ENCODE measurements at regions of chr5 and their contacts with region 1.

Region 1: GRCh38 chr5:57298295-57298984 is 124.6 kb downstream of the GPBP1 start:
- DNase-seq: peak; percentile 86
- H3K4me3 ChIP-seq: no peak overlapping the region
- H3K27ac ChIP-seq: peak overlapping the region; percentile 47
- H3K4me1 ChIP-seq: peaks cover 10% of the 10 kb centered on the region
- H3K27me3 ChIP-seq: no peaks in the 10 kb centered on the region
- CTCF ChIP-seq: peak; percentile 72 to 73
- POLR2A ChIP-seq: no peak

Region 2: DNA sequence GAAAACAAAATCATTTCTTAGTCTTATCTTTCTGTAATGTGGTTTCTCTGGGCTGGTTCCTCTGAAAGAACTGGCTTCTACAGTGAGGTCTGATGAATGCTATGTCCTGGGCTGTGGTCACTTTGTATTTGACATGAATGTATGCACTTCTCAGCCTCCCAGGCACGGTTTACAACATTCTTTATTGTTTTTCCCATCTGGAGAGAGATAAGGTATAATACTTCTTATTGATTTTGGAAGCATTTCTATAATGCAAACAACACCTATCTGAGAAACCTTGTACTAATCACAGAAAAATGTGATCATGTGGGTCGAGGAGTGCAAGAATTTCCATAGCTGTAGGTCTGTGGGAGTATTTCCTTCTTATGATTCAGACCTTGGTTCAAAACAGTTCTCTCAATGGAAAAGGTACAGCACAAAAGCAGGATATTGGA is 137.3 kb after region 1 on chr5:
- CTCF ChIA-PET with region 1: interaction called, 7 read pairs
- POLR2A ChIA-PET with region 1: no interaction called
- dilution Hi-C with region 1: no loop called
- intact Hi-C with region 1: loop called (anchors 1 kb)
- DNase-seq: peak; percentile 99
- H3K4me3 ChIP-seq: no peak overlapping the region
- H3K27ac ChIP-seq: peak overlapping the region; percentile 98
- H3K4me1 ChIP-seq: peaks cover 71% of the 10 kb centered on the region
- H3K27me3 ChIP-seq: no peaks in the 10 kb centered on the region
- CTCF ChIP-seq: no peak
- POLR2A ChIP-seq: peak; percentile 37

Region 3: GRCh38 chr5:57499262-57500050 is 201.0 kb after region 1 on chr5:
- CTCF ChIA-PET with region 1: interaction called, 40 read pairs
- POLR2A ChIA-PET with region 1: interaction called, 3 read pairs
- dilution Hi-C with region 1: no loop called
- intact Hi-C with region 1: loop called (anchors 1 kb)
- DNase-seq: peak; percentile 94
- H3K4me3 ChIP-seq: no peak overlapping the region
- H3K27ac ChIP-seq: no peak overlapping the region
- H3K4me1 ChIP-seq: peaks cover 37% of the 10 kb centered on the region
- H3K27me3 ChIP-seq: no peaks in the 10 kb centered on the region
- CTCF ChIP-seq: peak; percentile 62 to 66
- POLR2A ChIP-seq: no peak

Region 4: DNA sequence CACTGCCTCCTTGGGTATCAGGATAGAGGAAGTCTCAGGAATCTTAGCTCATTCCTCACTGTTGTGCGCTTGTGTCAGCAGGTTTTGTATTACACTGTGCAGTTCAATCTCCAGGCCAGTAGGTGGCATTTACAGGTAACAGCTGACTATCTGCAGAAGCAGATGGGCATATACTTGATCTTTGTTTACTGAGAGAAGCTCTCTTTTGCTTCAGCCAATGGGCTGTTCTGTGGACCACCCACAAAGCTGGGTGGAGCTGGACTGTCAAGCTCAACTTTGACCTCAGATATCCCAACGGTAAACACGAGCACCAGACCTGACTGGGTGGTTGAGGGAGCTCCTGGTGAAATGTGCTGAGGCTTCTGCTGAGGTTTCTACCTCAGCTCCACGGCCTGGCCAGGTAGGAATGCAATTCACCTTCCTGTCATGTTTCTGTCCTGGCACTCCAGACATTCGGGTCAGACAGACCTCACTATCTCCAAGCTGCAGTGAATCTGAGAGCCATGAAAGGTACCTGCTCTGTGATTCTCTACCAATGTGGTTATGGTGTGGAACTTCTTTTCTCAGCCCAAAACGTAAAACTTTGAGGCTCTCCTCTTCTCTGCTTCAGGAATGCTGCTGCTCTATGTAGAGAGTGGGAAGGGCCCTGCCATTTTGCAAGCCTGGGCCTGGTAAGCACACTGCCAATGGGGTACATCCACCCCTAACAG is 352.1 kb after region 1 on chr5:
- CTCF ChIA-PET with region 1: interaction called, 17 read pairs
- POLR2A ChIA-PET with region 1: no interaction called
- dilution Hi-C with region 1: no loop called
- intact Hi-C with region 1: loop called (anchors 2 kb)
- DNase-seq: peak; percentile 61
- H3K4me3 ChIP-seq: no peak overlapping the region
- H3K27ac ChIP-seq: no peak overlapping the region
- H3K4me1 ChIP-seq: peaks cover 5% of the 10 kb centered on the region
- H3K27me3 ChIP-seq: no peaks in the 10 kb centered on the region
- CTCF ChIP-seq: peak; percentile 62 to 83
- POLR2A ChIP-seq: no peak

Region 5: GRCh38 chr5:57887851-57888621 is 589.6 kb after region 1 on chr5:
- CTCF ChIA-PET with region 1: interaction called, 17 read pairs
- POLR2A ChIA-PET with region 1: no interaction called
- dilution Hi-C with region 1: no loop called
- intact Hi-C with region 1: loop called (anchors 1 kb)
- DNase-seq: peak; percentile 73
- H3K4me3 ChIP-seq: no peak overlapping the region
- H3K27ac ChIP-seq: no peak overlapping the region
- H3K4me1 ChIP-seq: no peaks in the 10 kb centered on the region
- H3K27me3 ChIP-seq: no peaks in the 10 kb centered on the region
- CTCF ChIP-seq: peak; percentile 53 to 66
- POLR2A ChIP-seq: no peak

Region 6: DNA sequence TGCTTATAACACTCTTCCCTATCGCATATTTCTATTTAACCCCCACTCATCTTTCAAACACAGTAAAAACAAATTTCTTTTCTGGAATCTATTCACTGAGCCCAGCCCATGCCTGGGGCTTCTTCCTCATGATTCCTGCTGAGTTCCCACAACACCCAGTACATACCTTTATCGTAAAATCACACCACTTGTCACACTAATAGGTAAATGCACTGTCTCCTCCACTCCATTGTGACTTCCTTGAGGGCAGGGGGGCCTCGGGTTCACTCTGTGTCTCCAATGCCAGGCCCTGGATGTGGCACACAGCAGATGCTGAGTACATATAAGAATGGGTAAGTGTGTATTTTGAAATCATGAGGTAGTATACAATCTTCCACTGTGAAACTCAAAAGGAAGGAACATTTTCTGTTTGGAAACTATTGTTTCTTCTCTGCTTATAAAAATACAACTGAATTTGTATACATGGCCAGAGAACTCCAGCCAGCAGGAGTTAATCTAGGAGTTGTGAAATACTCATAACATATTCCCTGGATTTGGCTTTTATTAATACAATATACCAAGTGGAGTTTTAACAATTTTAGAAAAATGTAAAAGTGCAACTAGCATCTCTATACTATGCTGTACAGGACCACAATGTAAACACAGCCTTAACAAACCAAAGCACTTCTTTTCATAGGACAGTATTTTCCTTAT is 1154.3 kb after region 1 on chr5:
- CTCF ChIA-PET with region 1: interaction called, 10 read pairs
- POLR2A ChIA-PET with region 1: interaction called, 4 read pairs
- dilution Hi-C with region 1: no loop called
- intact Hi-C with region 1: no loop called
- DNase-seq: peak; percentile 55
- H3K4me3 ChIP-seq: no peak overlapping the region
- H3K27ac ChIP-seq: no peak overlapping the region
- H3K4me1 ChIP-seq: peaks cover 32% of the 10 kb centered on the region
- H3K27me3 ChIP-seq: no peaks in the 10 kb centered on the region
- CTCF ChIP-seq: no peak
- POLR2A ChIP-seq: no peak

Region 7: GRCh38 chr5:58849921-58850667 is 1551.7 kb after region 1 on chr5:
- CTCF ChIA-PET with region 1: interaction called, 17 read pairs
- POLR2A ChIA-PET with region 1: no interaction called
- dilution Hi-C with region 1: no loop called
- intact Hi-C with region 1: no loop called
- DNase-seq: peak; percentile 44
- H3K4me3 ChIP-seq: no peak overlapping the region
- H3K27ac ChIP-seq: no peak overlapping the region
- H3K4me1 ChIP-seq: no peaks in the 10 kb centered on the region
- H3K27me3 ChIP-seq: peaks cover 6 to 10% of the 10 kb centered on the region in 2 experiments
- CTCF ChIP-seq: peak; percentile 8 to 27
- POLR2A ChIP-seq: no peak

Measured in endothelial cell of umbilical vein (primary cell).